ENCODE measurements at regions of chr5 and their contacts with region 1.

Region 1: DNA sequence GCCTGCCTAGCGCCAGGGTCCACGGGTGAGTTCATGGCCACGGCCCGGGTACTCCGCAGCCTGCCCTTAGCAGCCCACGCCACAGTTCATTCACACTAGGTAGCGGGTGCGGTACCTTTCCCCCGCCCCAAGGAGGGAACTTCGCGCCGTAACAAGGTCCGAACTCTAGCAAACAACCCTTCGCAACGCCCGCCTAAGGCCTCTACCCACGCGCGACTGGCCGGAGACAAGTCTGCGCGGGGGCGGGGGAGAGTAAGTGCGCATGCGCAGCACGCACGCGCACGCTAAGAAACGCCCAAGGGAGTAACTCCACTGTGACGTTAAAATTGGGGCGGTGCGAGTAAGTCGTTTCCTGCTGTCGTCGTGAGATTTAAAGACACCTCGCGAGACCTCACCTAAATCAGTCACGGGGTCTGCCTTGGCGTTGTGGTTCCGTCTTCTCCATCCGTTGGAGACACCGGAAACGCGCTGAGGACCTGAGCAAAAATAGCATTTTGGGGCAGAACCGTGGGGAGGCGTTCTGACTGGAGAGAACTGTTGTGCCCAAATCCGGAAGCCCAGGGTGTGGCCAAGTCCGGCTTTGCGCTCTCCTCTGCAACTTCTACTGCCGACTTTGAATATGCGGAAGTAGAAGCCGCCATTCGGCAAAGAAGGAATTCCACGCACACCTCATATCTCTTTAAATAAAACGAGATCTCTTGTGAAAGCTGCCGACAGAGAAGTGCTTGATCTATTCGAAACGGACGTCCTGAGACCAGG is at the start of gene RAPGEF6:
- DNase-seq: peak; percentile 100
- ATAC-seq: peak; percentile 83
- H3K4me3 ChIP-seq: peak within 1 kb of the TSS; percentile 77 to 91 (median 86)
- H3K4me3 Mint-ChIP-seq: peak within 1 kb of the TSS; percentile 95
- H3K27ac ChIP-seq: peak within 1 kb of the TSS; percentile 91 to 99
- H3K27ac Mint-ChIP-seq: peak within 1 kb of the TSS; percentile 99
- H3K4me1 ChIP-seq: peaks cover 41 to 46% of the 10 kb centered on the region in 2 donors
- H3K4me1 Mint-ChIP-seq: peaks cover 40% of the 10 kb centered on the region
- H3K27me3 ChIP-seq: no peaks in the 10 kb centered on the region
- H3K27me3 Mint-ChIP-seq: no peaks in the 10 kb centered on the region
- CTCF ChIP-seq: no peak
- total RNA-seq, gene RAPGEF6: 48.7 and 56.2 TPM in 2 replicates

Region 2: DNA sequence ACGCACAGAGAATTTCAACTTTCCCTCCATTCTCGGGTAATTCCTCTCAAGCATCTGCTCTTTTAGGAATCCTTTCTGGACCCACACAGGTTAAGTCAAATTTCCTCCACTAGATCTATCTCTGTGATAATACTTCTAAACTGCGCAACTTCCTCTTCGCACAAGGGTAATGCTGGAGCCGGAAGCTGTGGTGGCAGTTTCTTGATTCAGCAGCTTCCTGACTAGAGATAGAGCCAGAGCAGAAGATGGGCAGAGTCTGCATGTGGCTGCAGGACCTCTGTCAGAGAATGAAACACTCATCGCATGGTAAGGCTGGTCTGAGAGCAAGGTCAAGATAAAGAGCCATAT is 382.4 kb before region 1 on chr5:
- CTCF ChIA-PET with region 1: no interaction called
- POLR2A ChIA-PET with region 1: no interaction called
- intact Hi-C with region 1: loop called (anchors 5 kb)
- DNase-seq: peak; percentile 89
- ATAC-seq: peak; percentile 86
- H3K4me3 ChIP-seq: peak overlapping the region; percentile 39 to 55 (median 52)
- H3K4me3 Mint-ChIP-seq: peak overlapping the region; percentile 85
- H3K27ac ChIP-seq: peak overlapping the region; percentile 90 to 92
- H3K27ac Mint-ChIP-seq: peak overlapping the region; percentile 96
- H3K4me1 ChIP-seq: peaks cover 55 to 70% of the 10 kb centered on the region in 2 donors
- H3K4me1 Mint-ChIP-seq: peaks cover 72% of the 10 kb centered on the region
- H3K27me3 ChIP-seq: no peaks in the 10 kb centered on the region
- H3K27me3 Mint-ChIP-seq: no peaks in the 10 kb centered on the region
- CTCF ChIP-seq: no peak

Region 3: DNA sequence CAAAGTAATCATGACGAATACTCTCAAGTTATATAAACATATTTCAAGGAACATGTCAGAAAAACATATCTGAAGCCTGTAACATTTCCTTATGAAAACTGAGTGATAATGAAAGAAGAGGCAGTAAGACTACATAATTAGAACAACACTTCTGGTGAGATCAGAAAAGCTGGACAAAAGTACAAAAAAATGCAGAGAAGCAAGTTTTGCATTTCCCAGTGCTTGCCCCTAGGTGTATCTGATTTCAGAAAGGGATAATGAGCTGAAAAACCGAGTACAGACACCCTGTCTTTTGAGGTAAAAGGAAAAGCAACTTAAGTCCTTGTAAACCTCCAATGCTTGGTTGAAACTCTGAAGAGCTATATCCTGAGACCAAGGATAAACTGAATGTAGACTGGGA is 181.3 kb before region 1 on chr5:
- CTCF ChIA-PET with region 1: no interaction called
- POLR2A ChIA-PET with region 1: no interaction called
- intact Hi-C with region 1: no loop called
- DNase-seq: no peak
- ATAC-seq: no peak
- H3K4me3 ChIP-seq: no peak overlapping the region
- H3K4me3 Mint-ChIP-seq: no peak overlapping the region
- H3K27ac ChIP-seq: no peak overlapping the region
- H3K27ac Mint-ChIP-seq: no peak overlapping the region
- H3K4me1 ChIP-seq: no peaks in the 10 kb centered on the region
- H3K4me1 Mint-ChIP-seq: no peaks in the 10 kb centered on the region
- H3K27me3 ChIP-seq: no peaks in the 10 kb centered on the region
- H3K27me3 Mint-ChIP-seq: no peaks in the 10 kb centered on the region
- CTCF ChIP-seq: no peak

Region 4: DNA sequence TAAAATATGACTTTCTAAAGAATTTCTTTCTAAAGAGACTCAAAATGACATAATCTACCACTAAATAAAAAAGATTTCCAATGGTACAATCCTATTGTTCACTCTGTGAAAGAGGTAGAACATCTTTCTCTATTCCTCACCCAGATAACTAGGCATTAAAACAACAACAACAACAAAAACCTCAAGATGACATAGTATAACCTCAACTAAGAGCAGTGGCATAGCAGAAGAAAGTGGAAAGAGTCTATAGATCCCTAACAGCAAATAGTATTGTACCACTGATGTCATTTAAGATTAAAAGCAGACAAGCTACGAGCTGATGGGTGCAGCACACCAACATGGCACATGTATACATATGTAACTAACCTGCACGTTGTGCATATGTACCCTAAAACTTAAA is 30.1 kb before region 1 on chr5:
- CTCF ChIA-PET with region 1: no interaction called
- POLR2A ChIA-PET with region 1: interaction called, 10 read pairs
- intact Hi-C with region 1: no loop called
- DNase-seq: no peak
- ATAC-seq: no peak
- H3K4me3 ChIP-seq: no peak overlapping the region
- H3K4me3 Mint-ChIP-seq: no peak overlapping the region
- H3K27ac ChIP-seq: no peak overlapping the region
- H3K27ac Mint-ChIP-seq: no peak overlapping the region
- H3K4me1 ChIP-seq: peaks cover 14 to 19% of the 10 kb centered on the region in 2 donors
- H3K4me1 Mint-ChIP-seq: peaks cover 38% of the 10 kb centered on the region
- H3K27me3 ChIP-seq: no peaks in the 10 kb centered on the region
- H3K27me3 Mint-ChIP-seq: no peaks in the 10 kb centered on the region
- CTCF ChIP-seq: no peak

Region 5: GRCh38 chr5:131619102-131619501 is 16.1 kb before region 1 on chr5:
- CTCF ChIA-PET with region 1: no interaction called
- POLR2A ChIA-PET with region 1: no interaction called
- intact Hi-C with region 1: no loop called
- DNase-seq: no peak
- ATAC-seq: no peak
- H3K4me3 ChIP-seq: no peak overlapping the region
- H3K4me3 Mint-ChIP-seq: no peak overlapping the region
- H3K27ac ChIP-seq: no peak overlapping the region
- H3K27ac Mint-ChIP-seq: peak overlapping the region; percentile 34
- H3K4me1 ChIP-seq: peaks cover 8 to 20% of the 10 kb centered on the region in 2 donors
- H3K4me1 Mint-ChIP-seq: peaks cover 64% of the 10 kb centered on the region
- H3K27me3 ChIP-seq: no peaks in the 10 kb centered on the region
- H3K27me3 Mint-ChIP-seq: no peaks in the 10 kb centered on the region
- CTCF ChIP-seq: no peak

Region 6: DNA sequence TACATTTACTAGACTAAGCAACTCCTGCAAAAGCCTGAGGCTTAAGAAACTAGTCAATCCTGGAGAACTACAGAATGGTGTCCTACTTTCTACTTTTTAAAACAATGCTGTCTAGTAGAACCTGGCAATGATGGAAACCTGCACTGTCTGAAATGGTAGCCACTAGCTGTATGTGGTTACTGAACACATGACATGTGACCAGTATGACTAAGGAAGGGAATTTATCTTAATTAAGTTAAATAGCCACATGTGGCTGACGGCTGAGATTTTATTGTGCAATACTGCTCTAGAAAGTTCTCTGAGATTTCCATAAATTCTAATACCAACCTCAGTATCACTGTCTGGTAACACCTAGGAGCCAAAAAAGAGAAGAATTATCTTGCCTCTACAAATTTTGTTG is 44.7 kb after region 1 on chr5:
- CTCF ChIA-PET with region 1: no interaction called
- POLR2A ChIA-PET with region 1: no interaction called
- intact Hi-C with region 1: loop called (anchors 5 kb)
- DNase-seq: no peak
- ATAC-seq: no peak
- H3K4me3 ChIP-seq: no peak overlapping the region
- H3K4me3 Mint-ChIP-seq: no peak overlapping the region
- H3K27ac ChIP-seq: no peak overlapping the region
- H3K27ac Mint-ChIP-seq: no peak overlapping the region
- H3K4me1 ChIP-seq: peaks cover 16% of the 10 kb centered on the region in 2 donors
- H3K4me1 Mint-ChIP-seq: peaks cover 18% of the 10 kb centered on the region
- H3K27me3 ChIP-seq: no peaks in the 10 kb centered on the region
- H3K27me3 Mint-ChIP-seq: no peaks in the 10 kb centered on the region
- CTCF ChIP-seq: no peak

Region 7: GRCh38 chr5:132490486-132491367 is 855.6 kb after region 1 on chr5 and contains the start of gene IRF1:
- CTCF ChIA-PET with region 1: no interaction called
- POLR2A ChIA-PET with region 1: no interaction called
- intact Hi-C with region 1: loop called (anchors 10 kb)
- DNase-seq: peak; percentile 98
- ATAC-seq: peak; percentile 70
- H3K4me3 ChIP-seq: peak within 1 kb of the TSS; percentile 81 to 99 (median 89)
- H3K4me3 Mint-ChIP-seq: peak within 1 kb of the TSS; percentile 96
- H3K27ac ChIP-seq: peak within 1 kb of the TSS; percentile 99
- H3K27ac Mint-ChIP-seq: peak within 1 kb of the TSS; percentile 96
- H3K4me1 ChIP-seq: peaks cover 74 to 81% of the 10 kb centered on the region in 2 donors
- H3K4me1 Mint-ChIP-seq: peaks cover 76% of the 10 kb centered on the region
- H3K27me3 ChIP-seq: no peaks in the 10 kb centered on the region
- H3K27me3 Mint-ChIP-seq: no peaks in the 10 kb centered on the region
- CTCF ChIP-seq: no peak
- total RNA-seq, gene IRF1: 304 and 306 TPM in 2 replicates